Common myeloid progenitor, CD34-positive (primary cell): ENCODE measurements at regions of chr14 and their contacts with region 1.

Region 1: DNA sequence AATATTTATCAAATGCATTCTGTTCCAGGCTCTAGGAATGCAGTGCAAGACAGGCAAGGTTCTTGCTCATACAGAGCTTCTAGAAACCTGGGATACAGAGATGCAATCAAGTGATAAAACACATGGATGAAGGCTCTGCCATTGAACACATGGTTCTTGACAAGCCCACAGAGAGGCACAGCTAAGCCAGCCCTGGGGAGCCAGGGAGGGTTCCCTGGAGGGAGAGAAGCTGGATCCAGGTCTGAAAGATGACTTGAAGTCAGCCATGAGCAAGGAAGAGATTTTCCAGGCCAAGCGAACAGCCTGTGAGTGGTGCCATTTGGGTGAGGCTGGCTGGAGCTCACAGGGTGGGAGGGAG is 66.2 kb downstream of the IRF2BPL start:
- DNase-seq: no peak
- H3K4me3 ChIP-seq: peak overlapping the region in 6 of 7 experiments; percentile 38 to 72 (median 62)
- H3K27ac ChIP-seq: peak overlapping the region in 1 of 2 experiments; percentile 54
- H3K4me1 ChIP-seq: peaks cover 5 to 61% (median 41%) of the 10 kb centered on the region in 4 experiments
- H3K27me3 ChIP-seq: no peaks in the 10 kb centered on the region

Region 2: GRCh38 chr14:76947078-76947837 is 15.0 kb before region 1 on chr14:
- CTCF ChIA-PET with region 1: interaction called, 17 read pairs
- POLR2A ChIA-PET with region 1: interaction called, 3 read pairs
- DNase-seq: peak; percentile 83 to 90 (median 88)
- H3K4me3 ChIP-seq: peak overlapping the region in 2 of 7 experiments; percentile 12 to 45
- H3K27ac ChIP-seq: no peak overlapping the region
- H3K4me1 ChIP-seq: peaks cover 3 to 37% (median 16%) of the 10 kb centered on the region in 4 experiments
- H3K27me3 ChIP-seq: no peaks in the 10 kb centered on the region

Region 3: GRCh38 chr14:76977793-76978720 is 15.8 kb after region 1 on chr14:
- CTCF ChIA-PET with region 1: interaction called, 13 read pairs
- POLR2A ChIA-PET with region 1: interaction called, 4 read pairs
- DNase-seq: peak; percentile 94 to 97 (median 97)
- H3K4me3 ChIP-seq: peak overlapping the region in 1 of 7 experiments; percentile 20
- H3K27ac ChIP-seq: peak overlapping the region; percentile 41 to 68
- H3K4me1 ChIP-seq: peaks cover 4 to 44% (median 27%) of the 10 kb centered on the region in 4 experiments
- H3K27me3 ChIP-seq: no peaks in the 10 kb centered on the region

Region 4: GRCh38 chr14:76985540-76986230 is 23.4 kb after region 1 on chr14:
- CTCF ChIA-PET with region 1: interaction called, 16 read pairs
- POLR2A ChIA-PET with region 1: no interaction called
- DNase-seq: no peak
- H3K4me3 ChIP-seq: no peak overlapping the region
- H3K27ac ChIP-seq: no peak overlapping the region
- H3K4me1 ChIP-seq: peaks cover 0 to 37% (median 25%) of the 10 kb centered on the region in 4 experiments
- H3K27me3 ChIP-seq: no peaks in the 10 kb centered on the region

Region 5: DNA sequence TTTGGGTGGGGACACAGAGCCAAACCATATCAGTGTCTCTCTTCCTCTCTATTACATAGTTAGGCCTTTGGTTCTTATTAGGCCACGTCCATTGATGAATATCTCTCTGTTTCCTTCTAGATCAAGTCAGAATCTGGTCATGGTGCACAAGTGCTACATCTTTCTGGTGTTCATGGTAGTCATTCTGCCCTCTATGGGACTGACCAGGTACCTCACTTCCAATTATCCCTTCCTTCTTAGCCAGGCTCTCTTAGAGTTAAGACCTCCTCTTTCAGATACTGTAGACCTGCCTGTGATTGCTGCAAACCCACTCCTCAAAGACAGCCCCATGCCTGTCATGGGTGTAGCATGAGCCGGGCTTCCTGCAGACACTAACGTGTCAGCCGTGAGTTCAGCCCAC is 283.5 kb after region 1 on chr14:
- CTCF ChIA-PET with region 1: no interaction called
- POLR2A ChIA-PET with region 1: no interaction called
- DNase-seq: no peak
- H3K4me3 ChIP-seq: no peak overlapping the region
- H3K27ac ChIP-seq: no peak overlapping the region
- H3K4me1 ChIP-seq: peaks cover 2 to 23% (median 18%) of the 10 kb centered on the region in 4 experiments
- H3K27me3 ChIP-seq: no peaks in the 10 kb centered on the region

Region 6: DNA sequence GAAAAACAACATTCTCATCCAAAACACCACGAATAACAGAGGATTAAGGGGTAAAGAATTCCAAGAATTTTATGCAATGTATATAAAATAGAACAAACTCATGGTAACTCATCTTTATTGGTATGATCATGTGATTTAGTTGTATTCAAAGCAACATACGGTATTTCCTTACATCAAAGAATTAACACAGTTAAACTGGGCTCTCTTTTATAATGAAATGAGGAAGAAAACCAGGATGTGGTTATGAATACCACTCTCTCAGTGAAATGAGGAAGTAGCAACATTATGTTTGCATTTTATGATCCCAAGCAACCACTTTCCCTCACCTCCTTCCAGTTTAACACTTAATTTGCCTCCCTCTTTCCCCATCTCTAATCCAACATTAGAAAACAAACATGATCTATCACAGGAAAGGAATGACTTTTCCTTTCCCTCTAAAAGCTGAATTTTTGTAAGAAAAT is 631.2 kb after region 1 on chr14:
- CTCF ChIA-PET with region 1: no interaction called
- POLR2A ChIA-PET with region 1: no interaction called
- DNase-seq: peak; percentile 81 to 95 (median 89)
- H3K4me3 ChIP-seq: peak overlapping the region in 3 of 7 experiments; percentile 15 to 65 (median 40)
- H3K27ac ChIP-seq: peak overlapping the region; percentile 86 to 94
- H3K4me1 ChIP-seq: peaks cover 34 to 79% (median 68%) of the 10 kb centered on the region in 4 experiments
- H3K27me3 ChIP-seq: no peaks in the 10 kb centered on the region